ENCODE measurements at regions of chr17 and their contacts with region 1.

Region 1: GRCh38 chr17:50361561-50362480 is 11.2 kb downstream of the MRPL27 start:
- DNase-seq: peak; percentile 75
- ATAC-seq: peak; percentile 70
- H3K4me3 ChIP-seq: no peak overlapping the region
- H3K27ac ChIP-seq: peak overlapping the region; percentile 24
- H3K4me1 ChIP-seq: peaks cover 44% of the 10 kb centered on the region
- H3K27me3 ChIP-seq: no peaks in the 10 kb centered on the region
- CTCF ChIP-seq: peak; percentile 90
- EP300 ChIP-seq: no peak
- POLR2A ChIP-seq: peak; percentile 13 to 44; a peak in 1 of 4 replicates
- RAD21 ChIP-seq: peak; percentile 76

Region 2: GRCh38 chr17:50345432-50346312 is 16.1 kb before region 1 on chr17 and contains the start of gene XYLT2:
- CTCF ChIA-PET with region 1: no interaction called
- POLR2A ChIA-PET with region 1: interaction called, 12 read pairs
- in situ Hi-C with region 1: no loop called
- intact Hi-C with region 1: no loop called
- DNase-seq: peak; percentile 67
- ATAC-seq: peak; percentile 78
- H3K4me3 ChIP-seq: peak within 1 kb of the TSS; percentile 87 to 93 (median 88)
- H3K27ac ChIP-seq: peak within 1 kb of the TSS; percentile 53
- H3K4me1 ChIP-seq: peaks cover 28% of the 10 kb centered on the region
- H3K27me3 ChIP-seq: peaks cover 4 to 18% of the 10 kb centered on the region in 2 experiments; a peak in 4 of 5 replicates
- CTCF ChIP-seq: 0 out of 2 replicates have a peak, but pooled peaks have one; percentile 5
- EP300 ChIP-seq: no peak
- POLR2A ChIP-seq: peak; percentile 64 to 98; a peak in 3 of 4 replicates
- RAD21 ChIP-seq: no peak; the same call in 1 of the 2 replicates
- total RNA-seq, gene XYLT2: 7.5 and 22.1 TPM in 2 replicates

Region 3: GRCh38 chr17:50372758-50373556 is 11.1 kb after region 1 on chr17 and contains the starts of genes EME1 and MRPL27:
- CTCF ChIA-PET with region 1: no interaction called
- POLR2A ChIA-PET with region 1: interaction called, 21 read pairs
- in situ Hi-C with region 1: no loop called
- intact Hi-C with region 1: no loop called
- DNase-seq: peak; percentile 94
- ATAC-seq: peak; percentile 92
- H3K4me3 ChIP-seq: peak within 1 kb of the TSS; percentile 91 to 98 (median 93)
- H3K27ac ChIP-seq: peak within 1 kb of the TSS; percentile 87
- H3K4me1 ChIP-seq: peaks cover 29% of the 10 kb centered on the region
- H3K27me3 ChIP-seq: no peaks in the 10 kb centered on the region; a peak in 1 of 5 replicates
- CTCF ChIP-seq: peak; percentile 27; the same call in 1 of the 2 replicates
- EP300 ChIP-seq: 0 out of 4 replicates have a peak, but pooled peaks of 1 of the 2 experiments have one; percentile 32
- POLR2A ChIP-seq: peak; percentile 92 to 95
- RAD21 ChIP-seq: peak; percentile 56; the same call in 1 of the 2 replicates
- total RNA-seq, gene EME1: 17.3 and 24.6 TPM in 2 replicates
- total RNA-seq, gene MRPL27: 217 and 294 TPM in 2 replicates

Region 4: DNA sequence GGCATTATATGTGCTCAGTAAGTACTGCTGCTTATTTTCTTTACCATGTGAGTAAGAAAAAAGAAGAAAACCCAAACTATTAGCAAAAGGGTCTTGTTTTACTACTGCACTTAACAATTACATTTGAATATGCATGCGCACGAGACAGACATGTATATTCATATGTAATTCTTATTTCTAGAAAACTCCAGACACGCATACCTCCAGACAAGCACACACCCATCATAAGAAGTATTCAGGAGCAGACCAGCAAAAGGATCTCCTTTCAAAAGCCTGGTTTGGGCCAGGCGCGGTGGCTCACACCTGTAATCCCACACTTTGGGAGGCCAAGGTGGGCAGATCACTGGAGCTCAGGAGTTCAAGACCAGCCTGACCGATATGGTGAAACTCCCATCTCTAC is 27.7 kb after region 1 on chr17:
- CTCF ChIA-PET with region 1: no interaction called
- POLR2A ChIA-PET with region 1: no interaction called
- in situ Hi-C with region 1: no loop called
- intact Hi-C with region 1: no loop called
- DNase-seq: no peak
- ATAC-seq: no peak
- H3K4me3 ChIP-seq: no peak overlapping the region
- H3K27ac ChIP-seq: no peak overlapping the region
- H3K4me1 ChIP-seq: peaks cover 7% of the 10 kb centered on the region
- H3K27me3 ChIP-seq: no peaks in the 10 kb centered on the region
- CTCF ChIP-seq: no peak
- EP300 ChIP-seq: no peak
- POLR2A ChIP-seq: no peak
- RAD21 ChIP-seq: no peak

Region 5: DNA sequence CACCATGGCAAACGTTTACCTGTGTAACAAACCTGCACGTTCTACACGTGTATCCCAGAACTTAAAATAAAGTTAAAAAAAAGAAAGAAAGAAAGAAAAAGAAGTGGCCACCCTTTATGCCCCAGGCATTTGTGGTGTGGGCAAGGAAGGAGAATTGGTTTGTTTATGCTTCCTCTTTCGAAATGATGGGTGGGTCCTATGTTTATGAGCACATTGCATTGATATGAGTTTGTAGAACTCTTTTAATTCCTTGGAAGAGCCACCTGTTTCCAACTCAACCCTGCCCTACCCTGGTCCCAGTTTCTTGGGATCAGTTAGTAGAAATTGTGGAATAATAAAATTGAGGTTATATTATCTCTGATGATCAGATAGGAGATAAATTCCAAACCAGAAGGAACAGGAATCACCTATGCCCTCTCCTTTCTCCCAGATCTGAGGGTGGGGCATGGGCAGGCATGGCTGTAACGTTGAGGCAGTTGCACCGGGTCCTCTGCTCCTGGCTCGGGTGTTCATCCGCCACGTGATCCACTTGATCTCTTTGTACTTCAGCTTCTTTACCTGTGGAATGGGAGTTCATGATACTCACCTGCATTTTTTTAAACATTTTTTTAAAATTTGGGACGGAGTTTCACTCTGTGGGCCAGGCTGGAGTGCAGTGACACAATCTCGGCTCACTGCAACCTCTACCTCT is 90.9 kb after region 1 on chr17:
- CTCF ChIA-PET with region 1: no interaction called
- POLR2A ChIA-PET with region 1: no interaction called
- in situ Hi-C with region 1: no loop called
- intact Hi-C with region 1: no loop called
- DNase-seq: no peak
- ATAC-seq: no peak
- H3K4me3 ChIP-seq: no peak overlapping the region
- H3K27ac ChIP-seq: no peak overlapping the region
- H3K4me1 ChIP-seq: peaks cover 18% of the 10 kb centered on the region
- H3K27me3 ChIP-seq: no peaks in the 10 kb centered on the region
- CTCF ChIP-seq: no peak
- EP300 ChIP-seq: no peak
- POLR2A ChIP-seq: no peak
- RAD21 ChIP-seq: no peak